CD4-positive, alpha-beta T cell (primary cell): ENCODE measurements at regions of chr22 and their contacts with region 1.

Region 1: GRCh38 chr22:38305471-38306448 is 11.5 kb downstream of the CSNK1E start:
- DNase-seq: peak in 7 of 14 experiments; percentile 12 to 72 (median 42)
- ATAC-seq: peak; percentile 73
- H3K4me3 ChIP-seq: peak overlapping the region; percentile 19
- H3K4me3 Mint-ChIP-seq: peak overlapping the region; percentile 8
- H3K27ac ChIP-seq: no peak overlapping the region
- H3K27ac Mint-ChIP-seq: peak overlapping the region; percentile 41
- H3K4me1 ChIP-seq: peaks cover 17% of the 10 kb centered on the region
- H3K4me1 Mint-ChIP-seq: peaks cover 40% of the 10 kb centered on the region
- H3K27me3 ChIP-seq: no peaks in the 10 kb centered on the region
- H3K27me3 Mint-ChIP-seq: no peaks in the 10 kb centered on the region
- CTCF ChIP-seq: no peak

Region 2: DNA sequence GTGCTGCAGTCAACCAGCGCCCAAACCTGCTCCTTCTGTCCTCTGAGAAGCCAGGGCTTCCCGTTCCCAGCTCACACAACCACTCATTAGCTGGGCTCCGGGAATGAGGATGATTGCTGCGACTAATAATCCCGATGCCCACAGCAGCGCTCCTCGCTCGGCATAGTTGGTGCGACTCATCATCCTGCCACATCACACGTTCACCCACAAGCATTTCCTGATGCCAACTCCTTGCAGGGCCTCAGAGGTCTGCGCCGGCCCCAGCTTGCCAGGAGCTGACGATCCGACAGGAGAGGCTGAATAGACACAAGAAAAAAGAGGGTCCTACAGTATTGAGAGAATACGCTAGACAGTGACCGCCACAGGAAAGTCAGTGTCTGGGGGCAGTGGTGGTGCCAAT is 22.0 kb after region 1 on chr22:
- CTCF ChIA-PET with region 1: no interaction called
- POLR2A ChIA-PET with region 1: no interaction called
- intact Hi-C with region 1: loop called in 1 of 2 experiments (anchors 2 kb)
- DNase-seq: peak in 1 of 14 experiments; percentile 32
- ATAC-seq: no peak
- H3K4me3 ChIP-seq: no peak overlapping the region
- H3K4me3 Mint-ChIP-seq: no peak overlapping the region
- H3K27ac ChIP-seq: no peak overlapping the region
- H3K27ac Mint-ChIP-seq: no peak overlapping the region
- H3K4me1 ChIP-seq: peaks cover 5% of the 10 kb centered on the region
- H3K4me1 Mint-ChIP-seq: no peaks in the 10 kb centered on the region
- H3K27me3 ChIP-seq: no peaks in the 10 kb centered on the region
- H3K27me3 Mint-ChIP-seq: peaks cover 2% of the 10 kb centered on the region
- CTCF ChIP-seq: no peak